Ovary (tissue), 10 donors: ENCODE measurements at regions of chrX and their contacts with region 1.

Region 1: DNA sequence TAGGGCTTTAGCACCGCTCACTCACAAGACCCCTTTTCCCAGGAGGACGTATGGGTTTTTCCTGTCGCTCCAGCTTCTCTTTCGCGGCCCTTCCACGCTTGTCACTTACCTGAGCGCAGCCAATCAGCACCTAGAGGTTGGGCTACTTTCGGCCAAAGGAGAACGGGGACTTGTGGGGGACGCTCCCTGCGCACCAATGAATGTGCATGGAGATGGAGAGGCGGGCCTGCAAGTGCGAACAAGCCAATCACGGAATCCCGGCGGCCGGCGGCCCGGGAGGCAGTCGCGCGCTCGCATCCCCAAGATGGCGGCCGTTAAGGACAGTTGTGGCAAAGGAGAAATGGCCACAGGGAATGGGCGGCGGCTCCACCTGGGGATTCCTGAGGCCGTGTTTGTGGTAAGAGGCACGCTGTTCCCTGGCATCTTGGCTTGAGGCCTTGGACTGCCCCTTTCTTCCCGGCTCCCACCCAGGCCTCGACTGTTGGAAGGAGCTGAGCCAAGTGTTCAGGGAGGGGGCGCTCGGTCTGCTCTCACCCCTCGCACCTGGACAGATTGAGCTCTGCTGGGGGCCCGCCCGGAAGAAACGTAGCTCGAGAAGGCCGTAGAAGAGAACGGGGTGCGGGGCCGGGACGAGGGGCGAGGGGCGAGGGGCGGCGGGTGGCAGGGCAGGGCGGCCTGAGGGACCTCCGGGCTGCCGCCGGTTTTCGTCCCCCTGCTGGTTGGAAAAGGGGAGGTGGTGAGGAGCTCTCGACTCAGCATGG is at the start of gene VBP1:
- DNase-seq: peak; percentile 86 to 90 (median 88)
- H3K4me3 ChIP-seq: peak within 1 kb of the TSS; percentile 78
- H3K27ac ChIP-seq: peak within 1 kb of the TSS; percentile 80 to 83
- H3K4me1 ChIP-seq: peaks cover 2% of the 10 kb centered on the region
- H3K27me3 ChIP-seq: no peaks in the 10 kb centered on the region
- CTCF ChIP-seq: no peak
- EP300 ChIP-seq: no peak
- POLR2A ChIP-seq: peak; percentile 41
- total RNA-seq, gene VBP1: 27.7 to 46.0 (median 34.3) TPM

Region 2: GRCh38 chrX:153769865-153770600 is 1446.3 kb before region 1 on chrX:
- intact Hi-C with region 1: loop called in 1 of 4 experiments (anchors 5 kb)
- DNase-seq: peak in 3 of 5 donors; percentile 11 to 31 (median 16)
- H3K4me3 ChIP-seq: no peak overlapping the region
- H3K27ac ChIP-seq: no peak overlapping the region
- H3K4me1 ChIP-seq: no peaks in the 10 kb centered on the region
- H3K27me3 ChIP-seq: no peaks in the 10 kb centered on the region
- CTCF ChIP-seq: no peak
- EP300 ChIP-seq: no peak
- POLR2A ChIP-seq: no peak

Region 3: DNA sequence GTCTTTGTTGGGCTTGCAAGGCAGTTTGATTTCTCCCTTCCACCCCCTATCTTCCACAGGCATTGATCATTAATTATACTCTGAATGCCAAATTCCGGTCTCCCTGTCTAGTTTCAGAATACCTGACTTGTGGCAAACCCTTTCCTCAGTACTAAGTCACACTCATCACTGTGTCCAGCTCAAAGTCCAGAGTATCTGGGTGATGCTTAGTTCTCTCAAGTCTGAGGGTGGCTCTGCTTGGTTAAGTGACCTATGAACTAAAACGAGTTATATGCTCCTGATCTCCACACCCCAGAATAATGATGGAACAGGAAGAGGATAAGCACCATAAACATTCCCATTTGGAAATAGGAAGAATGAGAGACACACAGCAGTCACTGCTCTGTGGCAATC is 388.3 kb before region 1 on chrX:
- intact Hi-C with region 1: no loop called
- DNase-seq: no peak
- H3K4me3 ChIP-seq: no peak overlapping the region
- H3K27ac ChIP-seq: no peak overlapping the region
- H3K4me1 ChIP-seq: no peaks in the 10 kb centered on the region
- H3K27me3 ChIP-seq: no peaks in the 10 kb centered on the region
- CTCF ChIP-seq: no peak
- EP300 ChIP-seq: no peak
- POLR2A ChIP-seq: no peak

Region 4: DNA sequence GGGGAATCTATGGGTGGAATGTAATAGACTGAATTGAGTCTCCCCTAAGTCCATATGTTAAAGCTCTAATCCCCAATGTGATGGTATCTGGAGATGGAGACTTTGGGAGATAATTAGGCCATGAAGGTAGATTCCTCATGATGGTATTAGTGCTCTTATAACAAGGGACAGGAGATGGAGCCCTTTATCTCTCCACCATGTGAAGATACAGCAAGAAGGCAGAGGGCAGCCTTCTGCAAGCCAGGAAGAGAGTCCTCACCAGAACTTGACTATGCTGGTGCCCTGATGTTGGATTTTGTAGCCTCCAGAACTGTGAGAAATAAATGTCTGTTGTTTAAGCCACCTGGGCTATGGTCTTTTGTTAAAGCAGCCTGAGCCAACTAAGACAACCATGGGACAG is 318.4 kb after region 1 on chrX:
- intact Hi-C with region 1: no loop called
- DNase-seq: no peak
- H3K4me3 ChIP-seq: no peak overlapping the region
- H3K27ac ChIP-seq: no peak overlapping the region
- H3K4me1 ChIP-seq: no peaks in the 10 kb centered on the region
- H3K27me3 ChIP-seq: no peaks in the 10 kb centered on the region
- CTCF ChIP-seq: no peak
- EP300 ChIP-seq: no peak
- POLR2A ChIP-seq: no peak